ENCODE measurements at regions of chr3 and their contacts with region 1.

Region 1: GRCh38 chr3:149273096-149273751 is 51.6 kb upstream of the CP start:
- DNase-seq: peak in 1 of 2 donors; percentile 62
- ATAC-seq: peak; percentile 69 to 93 (median 86)
- H3K4me3 ChIP-seq: no peak overlapping the region
- H3K27ac ChIP-seq: peak overlapping the region in 4 of 10 donors; percentile 19 to 65 (median 44)
- H3K4me1 ChIP-seq: peaks cover 0 to 34% (median 10%) of the 10 kb centered on the region in 9 donors
- H3K27me3 ChIP-seq: no peaks in the 10 kb centered on the region
- CTCF ChIP-seq: peak; percentile 82 to 99 (median 92)

Region 2: GRCh38 chr3:148861277-148861869 is 411.9 kb before region 1 on chr3:
- intact Hi-C with region 1: loop called in 5 of 10 experiments (anchors 5 to 10 kb)
- DNase-seq: no peak
- ATAC-seq: peak in 1 of 8 donors; percentile 51
- H3K4me3 ChIP-seq: no peak overlapping the region
- H3K27ac ChIP-seq: no peak overlapping the region
- H3K4me1 ChIP-seq: no peaks in the 10 kb centered on the region
- H3K27me3 ChIP-seq: peaks cover 0 to 16% (median 7%) of the 10 kb centered on the region in 7 donors
- CTCF ChIP-seq: peak; percentile 58 to 85 (median 80)

Region 3: DNA sequence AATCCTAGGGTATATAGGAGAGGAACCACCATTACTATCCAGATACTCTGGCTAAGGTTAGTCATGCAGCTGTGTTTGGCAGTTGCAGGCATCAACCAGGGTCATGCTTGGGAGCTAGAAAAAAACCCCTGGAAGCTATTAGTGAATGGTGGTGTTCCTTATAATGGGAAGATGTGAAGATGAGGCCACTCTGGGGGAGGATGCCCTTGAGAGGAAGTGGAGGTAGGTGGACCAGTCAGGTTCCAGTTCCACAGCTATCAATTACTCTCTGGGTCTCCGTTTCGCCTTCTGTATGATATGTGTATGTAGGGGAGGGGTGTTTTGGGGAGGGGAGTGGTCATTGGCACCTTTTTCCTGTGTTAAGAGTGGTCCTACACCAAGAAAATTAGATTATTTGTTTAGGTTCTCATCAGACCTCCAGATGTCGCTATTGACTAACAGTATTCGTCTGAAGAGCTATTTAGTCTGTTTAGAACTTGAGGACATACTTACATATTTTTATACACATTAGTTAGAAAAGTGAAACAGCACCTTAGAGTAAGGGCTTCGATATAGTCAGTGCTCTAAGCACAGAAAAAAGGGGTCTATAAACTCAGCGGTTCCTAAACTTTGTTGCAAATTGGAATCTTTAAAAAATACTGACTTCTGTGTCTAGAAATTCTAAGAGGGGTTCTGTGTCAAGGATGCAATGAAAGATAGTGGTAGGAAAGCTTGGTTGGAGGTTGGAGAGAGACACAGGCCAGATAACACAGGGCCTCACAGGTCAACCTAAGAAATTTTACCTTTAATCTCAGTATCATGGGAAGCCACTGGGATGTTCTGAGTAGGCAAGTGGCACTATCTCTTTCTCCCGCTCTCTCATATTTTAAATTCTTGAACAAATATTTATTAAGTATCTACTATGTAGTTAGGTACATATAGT is 152.9 kb before region 1 on chr3:
- intact Hi-C with region 1: loop called (anchors 1 to 5 kb)
- DNase-seq: peak in 1 of 2 donors; percentile 29
- ATAC-seq: peak in 7 of 8 donors; percentile 36 to 85 (median 76)
- H3K4me3 ChIP-seq: no peak overlapping the region
- H3K27ac ChIP-seq: no peak overlapping the region
- H3K4me1 ChIP-seq: peaks cover 0 to 5% (median 0%) of the 10 kb centered on the region in 9 donors
- H3K27me3 ChIP-seq: no peaks in the 10 kb centered on the region
- CTCF ChIP-seq: peak; percentile 17 to 80 (median 67)

Region 4: DNA sequence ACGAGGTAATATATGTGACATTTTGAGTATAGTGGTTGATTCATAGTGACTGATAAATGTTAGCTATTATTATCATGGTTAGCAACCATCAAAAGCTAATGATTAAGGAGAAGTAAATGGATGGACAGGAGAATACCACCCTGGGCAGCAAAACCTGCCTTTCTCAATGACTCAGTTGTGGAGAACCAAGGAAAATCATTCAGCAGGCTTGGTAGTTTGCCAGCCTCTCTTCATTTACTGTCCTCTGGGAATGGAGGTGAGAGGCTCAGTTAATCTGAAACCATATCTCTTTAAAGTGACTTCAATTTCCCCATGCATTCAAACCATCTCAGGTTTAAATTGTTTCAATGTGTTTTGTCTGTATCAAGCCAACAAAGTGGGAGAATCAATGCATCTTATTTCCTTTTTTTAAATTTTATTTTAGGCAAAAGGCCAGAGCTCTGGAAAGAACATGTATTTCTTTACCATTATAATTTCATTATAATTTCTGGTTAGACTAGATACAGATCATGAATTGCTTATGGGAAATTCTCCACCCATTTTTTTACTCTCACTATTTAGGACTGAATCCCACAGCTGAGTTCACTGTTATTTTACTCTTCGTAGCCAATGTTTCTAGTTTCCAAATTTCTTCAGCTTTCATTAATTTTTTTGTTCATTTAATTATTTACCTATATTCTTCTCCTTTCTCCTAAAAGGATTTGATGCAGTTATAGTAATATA is 57.5 kb after region 1 on chr3:
- intact Hi-C with region 1: loop called in 2 of 10 experiments (anchors 5 kb)
- DNase-seq: no peak
- ATAC-seq: no peak
- H3K4me3 ChIP-seq: peak overlapping the region in 6 of 10 donors; percentile 17 to 55 (median 44)
- H3K27ac ChIP-seq: peak overlapping the region in 3 of 10 donors; percentile 23 to 81 (median 74)
- H3K4me1 ChIP-seq: peaks cover 0 to 22% (median 0%) of the 10 kb centered on the region in 9 donors
- H3K27me3 ChIP-seq: no peaks in the 10 kb centered on the region
- CTCF ChIP-seq: no peak

Region 5: DNA sequence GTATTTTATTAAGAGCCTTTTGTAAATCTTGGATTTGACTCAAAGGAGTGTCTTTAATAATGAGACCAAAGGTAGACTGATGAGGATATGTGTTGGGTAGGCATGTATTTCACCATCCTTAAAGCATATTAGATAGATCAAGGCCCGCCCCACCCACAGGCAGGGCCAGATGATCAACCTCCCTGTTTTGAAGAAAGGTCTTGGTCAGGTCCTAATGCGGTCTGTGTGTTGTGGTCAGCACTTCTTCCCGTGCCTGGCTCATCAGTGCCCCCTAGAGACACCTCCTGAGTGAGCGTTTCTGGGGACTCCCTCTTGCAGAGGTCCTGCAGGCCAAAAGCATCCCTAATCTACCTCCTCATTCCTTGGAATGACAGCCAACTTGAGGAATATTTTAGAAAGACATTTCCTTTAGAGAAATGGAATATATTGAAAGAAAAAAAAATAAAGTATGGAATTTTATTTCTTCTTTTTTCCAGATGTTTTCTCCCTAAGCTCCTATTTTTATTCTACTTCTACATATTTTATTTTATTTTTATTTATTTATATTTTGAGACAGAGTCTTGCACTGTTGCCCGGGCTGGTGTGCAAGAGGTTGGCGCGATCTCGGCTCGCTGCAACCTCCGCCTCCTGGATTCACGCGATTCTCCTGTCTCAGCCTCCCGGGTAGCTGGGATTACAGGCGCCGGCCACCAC is 207.2 kb after region 1 on chr3:
- intact Hi-C with region 1: loop called in 2 of 10 experiments (anchors 5 kb)
- DNase-seq: peak; percentile 74 to 88
- ATAC-seq: peak; percentile 92 to 97 (median 96)
- H3K4me3 ChIP-seq: no peak overlapping the region
- H3K27ac ChIP-seq: peak overlapping the region; percentile 12 to 89 (median 74)
- H3K4me1 ChIP-seq: peaks cover 0 to 20% (median 14%) of the 10 kb centered on the region in 9 donors
- H3K27me3 ChIP-seq: no peaks in the 10 kb centered on the region
- CTCF ChIP-seq: peak; percentile 71 to 97 (median 86)

Region 6: GRCh38 chr3:150996731-150997130 is 1723.5 kb after region 1 on chr3:
- intact Hi-C with region 1: no loop called
- DNase-seq: no peak
- ATAC-seq: no peak
- H3K4me3 ChIP-seq: no peak overlapping the region
- H3K27ac ChIP-seq: no peak overlapping the region
- H3K4me1 ChIP-seq: no peaks in the 10 kb centered on the region
- H3K27me3 ChIP-seq: peaks cover 0 to 4% (median 0%) of the 10 kb centered on the region in 7 donors
- CTCF ChIP-seq: no peak

Measured in heart right ventricle (tissue), 16 donors.